Activated CD8-positive, alpha-beta memory T cell treated with anti-CD3 and anti-CD28 coated beads, Interleukin-2, amount 10 ng/mL, durations not matched to agents 7 days and 5 days (primary cell): ENCODE measurements at regions of chr17 and their contacts with region 1.

Region 1: DNA sequence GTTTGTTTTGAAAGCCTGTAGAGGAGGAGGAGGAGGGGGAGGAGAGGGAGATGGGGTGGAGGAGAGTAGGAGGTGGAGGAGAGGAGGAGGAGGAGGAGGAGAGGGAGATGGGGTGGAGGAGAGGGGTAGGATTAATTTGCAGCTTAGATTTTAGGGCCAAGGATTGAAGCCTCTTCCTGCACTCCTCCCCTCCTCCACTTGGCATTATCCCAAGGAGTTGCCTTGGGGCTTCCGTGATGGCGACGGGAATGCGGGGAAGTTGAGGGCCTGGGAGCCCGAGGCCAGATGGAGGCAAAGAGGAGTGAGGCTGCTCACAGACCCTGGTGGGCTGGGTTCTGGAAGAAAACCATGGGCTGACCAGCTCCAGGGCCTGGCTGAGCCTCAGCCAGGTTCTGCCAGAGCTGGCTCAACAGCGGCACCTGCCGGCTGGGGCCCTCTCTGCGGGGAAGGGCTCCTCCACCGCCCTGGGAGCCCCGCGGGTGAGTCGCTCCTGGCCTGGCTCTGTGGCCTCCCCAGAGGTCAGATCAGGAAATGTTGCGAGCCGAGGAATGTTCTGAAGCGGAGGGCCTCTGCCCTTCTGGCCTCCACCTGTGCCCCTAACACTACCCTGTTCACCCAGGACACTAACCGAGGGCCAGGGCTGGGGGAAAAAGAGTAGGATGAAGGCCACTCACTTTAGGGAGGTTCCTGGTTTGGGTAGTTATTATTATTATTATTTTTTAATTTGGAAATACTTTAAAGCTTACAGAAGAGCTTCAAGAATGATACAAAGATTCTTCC is 23.9 kb upstream of the FMNL1 start:
- DNase-seq: peak; percentile 90
- ATAC-seq: peak; percentile 100
- H3K4me3 Mint-ChIP-seq: no peak overlapping the region
- H3K27ac Mint-ChIP-seq: peak overlapping the region; percentile 19
- H3K4me1 Mint-ChIP-seq: peaks cover 6% of the 10 kb centered on the region
- H3K27me3 Mint-ChIP-seq: no peaks in the 10 kb centered on the region

Region 2: GRCh38 chr17:44804302-44805089 is 393.2 kb before region 1 on chr17:
- CTCF ChIA-PET with region 1: no interaction called
- DNase-seq: no peak
- ATAC-seq: no peak
- H3K4me3 Mint-ChIP-seq: no peak overlapping the region
- H3K27ac Mint-ChIP-seq: no peak overlapping the region
- H3K4me1 Mint-ChIP-seq: no peaks in the 10 kb centered on the region
- H3K27me3 Mint-ChIP-seq: peaks cover 30% of the 10 kb centered on the region

Region 3: DNA sequence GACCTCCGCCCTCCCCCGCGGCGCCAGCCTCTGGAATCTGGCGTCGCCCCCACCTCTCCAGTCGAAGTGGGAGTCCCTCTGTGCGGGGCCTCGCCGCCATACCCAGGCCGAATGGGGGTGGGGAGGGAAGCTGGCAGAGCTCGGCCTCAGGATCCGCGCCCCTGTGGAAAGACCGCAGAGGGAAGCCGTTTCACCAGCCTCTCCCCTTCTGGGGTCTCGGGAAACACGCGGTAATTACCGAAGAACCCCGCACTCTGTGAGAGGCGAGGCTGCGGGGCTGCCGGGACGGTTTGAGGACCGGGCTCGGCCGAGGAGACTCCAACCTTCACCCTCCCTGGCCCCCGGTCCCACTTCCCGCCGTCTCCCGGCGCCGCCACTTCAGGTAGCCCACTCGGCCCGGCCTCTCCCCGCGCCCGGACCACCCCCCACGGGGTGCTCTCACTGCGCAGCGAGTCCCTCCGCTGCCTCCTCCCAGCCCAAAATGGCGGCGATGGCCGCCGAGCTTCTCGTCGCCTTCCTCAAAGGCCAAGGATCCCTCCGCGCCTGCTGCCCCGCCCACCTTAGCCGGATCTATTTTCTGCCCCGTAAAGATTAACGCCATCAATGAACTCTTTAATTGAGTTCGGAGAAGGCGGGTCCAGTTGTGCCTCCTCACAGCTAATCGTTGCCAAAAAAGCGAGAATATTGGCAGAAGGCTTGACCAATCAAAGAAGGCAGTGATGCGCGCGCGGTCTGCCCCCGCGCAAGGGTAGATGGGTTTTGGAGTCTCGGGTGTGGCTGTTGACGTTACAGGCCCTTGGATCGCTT is 36.5 kb before region 1 on chr17:
- CTCF ChIA-PET with region 1: interaction called, 24 read pairs
- DNase-seq: peak; percentile 99
- ATAC-seq: peak; percentile 96
- H3K4me3 Mint-ChIP-seq: peak overlapping the region; percentile 98
- H3K27ac Mint-ChIP-seq: peak overlapping the region; percentile 99
- H3K4me1 Mint-ChIP-seq: peaks cover 41% of the 10 kb centered on the region
- H3K27me3 Mint-ChIP-seq: no peaks in the 10 kb centered on the region

Region 4: GRCh38 chr17:45172454-45173286 is 25.1 kb before region 1 on chr17:
- CTCF ChIA-PET with region 1: interaction called, 17 read pairs
- DNase-seq: peak; percentile 62
- ATAC-seq: peak; percentile 68
- H3K4me3 Mint-ChIP-seq: peak overlapping the region; percentile 48
- H3K27ac Mint-ChIP-seq: peak overlapping the region; percentile 89
- H3K4me1 Mint-ChIP-seq: peaks cover 21% of the 10 kb centered on the region
- H3K27me3 Mint-ChIP-seq: no peaks in the 10 kb centered on the region

Region 5: GRCh38 chr17:45186801-45187354 is 10.9 kb before region 1 on chr17:
- CTCF ChIA-PET with region 1: interaction called, 17 read pairs
- DNase-seq: no peak
- ATAC-seq: no peak
- H3K4me3 Mint-ChIP-seq: no peak overlapping the region
- H3K27ac Mint-ChIP-seq: no peak overlapping the region
- H3K4me1 Mint-ChIP-seq: no peaks in the 10 kb centered on the region
- H3K27me3 Mint-ChIP-seq: no peaks in the 10 kb centered on the region